Activated CD4-positive, alpha-beta memory T cell treated with anti-CD3 and anti-CD28 coated beads, Interleukin-2, amount 10 ng/mL, durations not matched to agents 7 days and 5 days (primary cell): ENCODE measurements at regions of chr15 and their contacts with region 1.

Region 1: GRCh38 chr15:78540141-78540928 is at the start of gene PSMA4:
- DNase-seq: peak; percentile 94
- H3K4me3 Mint-ChIP-seq: peak within 1 kb of the TSS; percentile 90
- H3K27ac Mint-ChIP-seq: peak within 1 kb of the TSS; percentile 87
- H3K4me1 Mint-ChIP-seq: peaks cover 38% of the 10 kb centered on the region
- H3K27me3 Mint-ChIP-seq: no peaks in the 10 kb centered on the region
- total RNA-seq, gene PSMA4: 226 to 235 TPM

Region 2: DNA sequence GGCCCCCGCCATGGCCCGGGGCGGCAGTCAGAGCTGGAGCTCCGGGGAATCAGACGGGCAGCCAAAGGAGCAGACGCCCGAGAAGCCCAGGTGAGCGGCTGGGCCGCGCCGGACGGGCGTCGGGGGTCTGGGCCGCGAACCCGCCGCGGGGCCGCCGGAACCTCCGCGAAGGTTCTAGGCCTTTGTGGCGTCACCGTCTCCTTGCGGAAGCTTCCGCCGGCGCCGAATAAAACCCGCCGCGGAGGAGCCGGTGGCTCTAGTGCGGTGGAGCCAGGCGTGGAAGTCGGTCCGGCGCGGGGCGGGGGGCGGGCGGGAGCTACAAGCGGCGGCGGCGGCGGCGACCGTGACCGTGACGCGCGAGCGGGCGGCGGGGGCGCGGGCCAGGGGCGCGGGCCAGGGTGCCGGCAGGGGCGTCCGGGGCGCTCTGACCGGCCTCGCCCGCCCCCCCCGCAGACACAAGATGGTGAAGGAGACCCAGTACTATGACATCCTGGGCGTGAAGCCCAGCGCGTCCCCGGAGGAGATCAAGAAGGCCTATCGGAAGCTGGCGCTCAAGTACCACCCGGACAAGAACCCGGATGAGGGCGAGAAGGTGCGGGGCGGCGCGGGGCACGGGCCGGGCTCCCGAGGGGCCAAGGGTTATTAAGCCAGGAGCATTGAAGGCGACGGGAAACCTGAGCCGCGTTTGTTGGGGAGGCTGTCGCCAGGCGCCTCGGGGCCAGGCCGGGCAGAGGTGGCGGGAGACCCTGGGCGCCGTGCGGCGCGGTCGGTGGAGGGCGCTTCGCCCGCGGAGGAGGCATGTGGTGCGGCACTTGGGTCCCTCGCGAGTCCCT is 275.8 kb before region 1 on chr15 and contains the start of gene DNAJA4:
- CTCF ChIA-PET with region 1: no interaction called
- POLR2A ChIA-PET with region 1: interaction called, 11 read pairs
- DNase-seq: peak; percentile 68
- H3K4me3 Mint-ChIP-seq: peak within 1 kb of the TSS; percentile 83
- H3K27ac Mint-ChIP-seq: peak within 1 kb of the TSS; percentile 71
- H3K4me1 Mint-ChIP-seq: peaks cover 29% of the 10 kb centered on the region
- H3K27me3 Mint-ChIP-seq: no peaks in the 10 kb centered on the region
- total RNA-seq, gene DNAJA4: 27.7 to 30.9 TPM

Region 3: GRCh38 chr15:78437762-78438302 is 102.5 kb before region 1 on chr15 and contains the start of gene IREB2:
- CTCF ChIA-PET with region 1: interaction called, 5 read pairs
- POLR2A ChIA-PET with region 1: interaction called, 56 read pairs
- DNase-seq: peak; percentile 98
- H3K4me3 Mint-ChIP-seq: peak within 1 kb of the TSS; percentile 92
- H3K27ac Mint-ChIP-seq: peak within 1 kb of the TSS; percentile 89
- H3K4me1 Mint-ChIP-seq: peaks cover 48% of the 10 kb centered on the region
- H3K27me3 Mint-ChIP-seq: peaks cover under 1% of the 10 kb centered on the region
- total RNA-seq, gene IREB2: 57.8 to 61.5 TPM

Region 4: GRCh38 chr15:78552597-78552996 is 12.3 kb after region 1 on chr15:
- CTCF ChIA-PET with region 1: interaction called, 3 read pairs
- POLR2A ChIA-PET with region 1: interaction called, 15 read pairs
- DNase-seq: no peak
- H3K4me3 Mint-ChIP-seq: no peak overlapping the region
- H3K27ac Mint-ChIP-seq: no peak overlapping the region
- H3K4me1 Mint-ChIP-seq: no peaks in the 10 kb centered on the region
- H3K27me3 Mint-ChIP-seq: no peaks in the 10 kb centered on the region

Region 5: GRCh38 chr15:78872972-78873792 is 332.8 kb after region 1 on chr15:
- CTCF ChIA-PET with region 1: no interaction called
- POLR2A ChIA-PET with region 1: interaction called, 10 read pairs
- DNase-seq: peak; percentile 90
- H3K4me3 Mint-ChIP-seq: peak overlapping the region; percentile 94
- H3K27ac Mint-ChIP-seq: peak overlapping the region; percentile 100
- H3K4me1 Mint-ChIP-seq: peaks cover 43% of the 10 kb centered on the region
- H3K27me3 Mint-ChIP-seq: no peaks in the 10 kb centered on the region

Region 6: DNA sequence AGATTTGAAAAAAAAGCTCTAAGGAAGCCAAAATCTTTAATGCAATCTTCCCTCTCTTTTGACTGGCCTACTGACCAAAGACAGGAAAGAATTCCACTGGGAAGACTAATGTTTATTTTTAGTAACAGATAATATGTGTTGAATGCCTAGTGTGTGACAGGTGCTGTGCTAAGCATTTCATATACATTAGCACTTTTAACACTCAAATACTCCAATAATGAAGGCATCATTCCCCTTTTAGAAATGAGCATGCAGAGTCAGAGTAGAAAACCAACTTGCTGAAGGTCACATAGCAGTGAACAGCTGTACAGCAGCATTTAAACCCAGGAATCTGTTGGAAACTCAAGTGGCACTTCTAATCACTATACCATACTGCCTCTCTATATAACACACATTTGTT is 1062.4 kb after region 1 on chr15:
- CTCF ChIA-PET with region 1: no interaction called
- POLR2A ChIA-PET with region 1: no interaction called
- DNase-seq: no peak
- H3K4me3 Mint-ChIP-seq: no peak overlapping the region
- H3K27ac Mint-ChIP-seq: no peak overlapping the region
- H3K4me1 Mint-ChIP-seq: no peaks in the 10 kb centered on the region
- H3K27me3 Mint-ChIP-seq: peaks cover 15% of the 10 kb centered on the region